Body of pancreas (tissue), 4 donors: ENCODE measurements at regions of chr16 and their contacts with region 1.

Region 1: DNA sequence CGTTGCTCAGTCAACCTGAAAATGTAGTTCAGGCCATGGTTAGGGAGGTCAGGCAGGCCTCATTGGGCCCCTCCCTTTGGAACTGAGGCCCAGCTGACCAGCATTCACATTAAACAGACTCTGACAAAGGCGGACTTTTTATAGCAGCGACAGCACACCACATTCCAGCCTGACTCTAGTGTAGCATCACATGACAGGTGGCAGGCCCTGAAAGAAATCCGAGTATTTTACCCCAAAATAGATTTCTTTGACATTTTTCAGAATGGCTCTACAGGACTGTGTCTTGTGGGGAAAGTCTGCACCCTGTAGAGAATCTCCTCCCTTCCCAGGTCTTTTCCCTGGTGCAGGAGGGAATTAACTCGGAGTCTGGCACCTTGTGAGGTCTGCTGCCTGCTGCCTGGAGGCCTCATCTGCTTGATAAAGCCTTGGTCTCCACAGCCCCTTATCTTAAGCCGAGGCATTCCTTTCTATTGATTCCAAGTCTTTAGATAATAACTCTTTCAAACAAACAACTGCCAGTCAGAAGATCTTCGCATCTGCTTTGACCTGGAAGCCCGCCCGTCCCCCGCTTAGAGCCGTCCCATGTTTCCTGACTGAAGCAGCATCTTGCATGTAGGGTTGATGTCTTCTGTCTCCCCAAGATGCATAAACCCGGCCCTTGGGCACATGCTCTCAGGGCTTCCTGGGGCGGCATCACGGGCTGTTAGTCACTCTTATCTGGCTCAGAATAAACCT is 44.0 kb upstream of the CAPN15 start:
- DNase-seq: no peak
- ATAC-seq: no peak
- H3K4me3 ChIP-seq: no peak overlapping the region
- H3K27ac ChIP-seq: no peak overlapping the region
- H3K4me1 ChIP-seq: no peaks in the 10 kb centered on the region
- H3K27me3 ChIP-seq: no peaks in the 10 kb centered on the region
- CTCF ChIP-seq: no peak
- POLR2A ChIP-seq: no peak

Region 2: GRCh38 chr16:397736-398332 is 85.7 kb before region 1 on chr16:
- intact Hi-C with region 1: loop called (anchors 5 kb)
- DNase-seq: peak; percentile 83 to 87 (median 86)
- ATAC-seq: peak; percentile 43
- H3K4me3 ChIP-seq: no peak overlapping the region
- H3K27ac ChIP-seq: peak overlapping the region; percentile 64 to 82 (median 66)
- H3K4me1 ChIP-seq: peaks cover 34% of the 10 kb centered on the region
- H3K27me3 ChIP-seq: no peaks in the 10 kb centered on the region
- CTCF ChIP-seq: peak; percentile 39 to 70 (median 60)
- POLR2A ChIP-seq: no peak